ENCODE measurements at regions of chr3 and their contacts with region 1.

Region 1: DNA sequence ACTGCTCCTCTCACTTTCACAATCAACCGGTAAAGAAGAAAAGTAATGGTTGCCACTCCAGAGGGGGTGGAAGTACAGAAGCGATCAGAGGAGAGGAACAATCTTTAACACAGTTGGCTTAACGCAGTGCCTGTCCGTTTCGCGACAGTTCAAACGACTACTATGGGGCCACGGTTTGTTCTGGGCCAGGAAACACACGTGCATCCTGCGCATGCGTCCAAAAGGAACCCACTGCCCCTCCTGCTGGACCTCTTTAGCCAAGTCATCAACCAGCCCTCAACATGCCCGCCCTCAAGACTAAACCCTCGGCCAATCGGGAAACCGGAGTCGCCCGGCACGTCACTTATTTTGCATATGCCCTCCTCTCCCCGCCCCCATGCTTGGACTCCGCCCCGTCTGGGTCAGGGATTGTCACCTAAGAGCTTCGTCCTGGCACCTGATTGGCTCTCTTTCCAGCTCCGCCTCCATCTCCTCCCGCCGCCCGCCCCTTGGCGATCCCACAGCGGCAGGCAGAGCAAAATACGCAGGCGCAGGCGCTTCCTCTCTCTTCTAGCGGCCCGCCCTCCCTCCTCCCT is 345 bp upstream of the CDV3 start:
- DNase-seq: peak; percentile 100
- H3K4me3 ChIP-seq: peak overlapping the region; percentile 48
- H3K4me3 Mint-ChIP-seq: peak overlapping the region; percentile 79 to 94 (median 89)
- H3K27ac ChIP-seq: peak overlapping the region; percentile 79
- H3K27ac Mint-ChIP-seq: peak overlapping the region; percentile 95 to 100 (median 99)
- H3K4me1 ChIP-seq: peaks cover 41% of the 10 kb centered on the region
- H3K4me1 Mint-ChIP-seq: peaks cover 51 to 59% (median 53%) of the 10 kb centered on the region in 3 donors
- H3K27me3 ChIP-seq: no peaks in the 10 kb centered on the region
- H3K27me3 Mint-ChIP-seq: peaks cover 0 to 3% of the 10 kb centered on the region in 2 donors

Region 2: GRCh38 chr3:133237380-133237779 is 335.8 kb before region 1 on chr3:
- CTCF ChIA-PET with region 1: no interaction called
- POLR2A ChIA-PET with region 1: no interaction called
- DNase-seq: no peak
- H3K4me3 ChIP-seq: no peak overlapping the region
- H3K4me3 Mint-ChIP-seq: no peak overlapping the region
- H3K27ac ChIP-seq: no peak overlapping the region
- H3K27ac Mint-ChIP-seq: no peak overlapping the region
- H3K4me1 ChIP-seq: no peaks in the 10 kb centered on the region
- H3K4me1 Mint-ChIP-seq: no peaks in the 10 kb centered on the region
- H3K27me3 ChIP-seq: no peaks in the 10 kb centered on the region
- H3K27me3 Mint-ChIP-seq: peaks cover 6 to 7% of the 10 kb centered on the region in 2 donors

Region 3: DNA sequence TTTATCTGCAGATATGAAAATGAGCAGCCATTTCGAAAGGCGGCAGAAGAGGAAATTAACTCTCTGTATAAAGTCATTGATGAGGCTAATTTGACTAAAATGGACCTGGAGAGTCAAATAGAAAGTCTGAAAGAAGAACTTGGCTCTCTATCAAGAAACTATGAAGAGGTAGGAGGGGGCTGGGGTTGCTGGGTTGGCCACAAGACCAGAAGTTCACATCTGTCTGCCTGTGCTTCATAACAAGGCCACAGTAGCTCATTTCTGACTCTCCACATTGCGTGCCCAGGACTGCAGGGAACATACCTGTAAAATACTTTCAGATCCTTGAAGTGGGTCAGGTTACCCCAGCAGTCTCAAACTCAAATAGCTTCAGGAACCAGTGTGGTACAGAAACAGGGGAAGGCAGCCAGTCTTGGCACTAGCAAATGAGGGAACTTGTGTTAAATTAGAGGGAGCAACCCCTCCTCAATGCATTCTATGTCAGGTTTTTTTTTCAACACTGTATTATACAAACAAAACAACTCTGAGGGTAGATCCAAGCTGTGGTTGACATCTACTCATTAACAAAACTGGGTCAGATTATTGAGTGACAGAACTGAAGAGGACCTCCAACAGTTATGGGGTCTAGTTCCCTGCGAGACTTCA is 124.5 kb before region 1 on chr3:
- CTCF ChIA-PET with region 1: interaction called, 7 read pairs
- POLR2A ChIA-PET with region 1: interaction called, 19 read pairs
- DNase-seq: peak in 2 of 5 donors; percentile 14 to 72
- H3K4me3 ChIP-seq: no peak overlapping the region
- H3K4me3 Mint-ChIP-seq: peak overlapping the region in 6 of 7 donors; percentile 1 to 65 (median 30)
- H3K27ac ChIP-seq: no peak overlapping the region
- H3K27ac Mint-ChIP-seq: peak overlapping the region; percentile 64 to 93 (median 88)
- H3K4me1 ChIP-seq: peaks cover 8% of the 10 kb centered on the region
- H3K4me1 Mint-ChIP-seq: peaks cover 14 to 47% (median 29%) of the 10 kb centered on the region in 3 donors
- H3K27me3 ChIP-seq: no peaks in the 10 kb centered on the region
- H3K27me3 Mint-ChIP-seq: no peaks in the 10 kb centered on the region

Region 4: DNA sequence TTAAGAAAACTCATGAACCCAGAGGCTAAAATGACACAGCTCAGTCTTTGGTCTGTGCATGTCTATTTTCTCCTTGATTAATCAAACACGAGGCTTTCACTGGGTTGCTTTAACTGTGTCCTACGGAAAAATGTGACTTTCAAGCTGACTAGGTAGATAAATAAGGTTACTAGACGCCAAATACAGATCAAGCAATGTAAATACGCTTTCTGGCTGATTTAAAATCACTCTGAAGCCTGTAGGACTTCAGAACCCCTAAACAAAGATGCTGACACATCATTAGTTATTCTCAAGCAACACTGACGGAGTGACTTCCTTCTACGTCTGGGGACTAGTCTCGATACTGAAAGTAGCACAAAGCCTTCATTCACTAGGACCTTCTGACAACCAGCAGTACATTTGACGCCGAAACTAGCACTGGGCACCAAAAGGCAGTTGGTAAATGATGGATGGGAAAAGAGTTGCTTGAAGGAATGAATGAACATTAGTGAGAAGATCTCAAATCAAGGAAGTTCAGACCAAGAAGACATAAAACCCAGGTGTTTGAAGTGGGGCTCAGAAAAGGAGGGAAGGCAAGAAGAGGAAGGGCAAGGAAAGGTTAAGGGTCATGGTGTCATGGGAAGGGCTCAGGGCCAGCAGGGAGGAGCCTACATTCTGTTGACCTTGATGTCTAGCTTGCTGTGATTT is 66.8 kb before region 1 on chr3:
- CTCF ChIA-PET with region 1: interaction called, 5 read pairs
- POLR2A ChIA-PET with region 1: interaction called, 11 read pairs
- DNase-seq: peak in 3 of 5 donors; percentile 37 to 52 (median 40)
- H3K4me3 ChIP-seq: peak overlapping the region; percentile 58
- H3K4me3 Mint-ChIP-seq: peak overlapping the region; percentile 37 to 85 (median 78)
- H3K27ac ChIP-seq: no peak overlapping the region
- H3K27ac Mint-ChIP-seq: peak overlapping the region; percentile 48 to 97 (median 94)
- H3K4me1 ChIP-seq: peaks cover 17% of the 10 kb centered on the region
- H3K4me1 Mint-ChIP-seq: peaks cover 13 to 20% (median 15%) of the 10 kb centered on the region in 3 donors
- H3K27me3 ChIP-seq: no peaks in the 10 kb centered on the region
- H3K27me3 Mint-ChIP-seq: peaks cover 0 to 1% of the 10 kb centered on the region in 2 donors

Region 5: DNA sequence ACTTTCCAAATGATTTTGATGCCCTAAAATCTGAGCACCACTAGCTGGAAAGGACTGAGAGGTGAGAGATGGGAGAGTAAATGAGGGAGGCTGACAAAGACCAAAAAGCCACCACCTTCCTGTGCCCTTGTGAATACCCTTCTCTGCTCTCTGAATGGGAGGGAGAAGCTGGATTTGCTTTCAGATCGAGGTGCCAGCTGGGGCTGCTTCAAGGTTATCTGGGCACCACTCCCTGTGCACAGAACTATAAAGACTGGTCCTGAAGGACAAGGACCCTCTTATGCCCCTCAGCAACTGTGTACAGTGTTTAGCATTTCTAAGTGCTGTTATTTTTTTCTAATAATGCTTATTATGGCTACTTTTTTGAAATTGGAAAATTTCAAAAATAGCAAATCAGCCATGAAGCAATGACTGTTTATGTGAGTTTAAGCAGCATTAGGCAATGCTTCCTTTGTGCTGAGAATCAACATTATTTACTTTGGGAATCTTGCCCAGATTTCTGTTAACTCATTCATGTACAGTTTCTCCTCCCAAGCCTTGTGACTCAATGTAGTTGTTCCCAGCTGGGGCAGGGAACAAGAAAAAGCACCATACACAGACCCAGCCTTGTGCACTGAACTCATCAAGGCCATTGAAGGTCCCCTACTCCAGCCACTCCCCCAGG is 37.0 kb before region 1 on chr3:
- CTCF ChIA-PET with region 1: no interaction called
- POLR2A ChIA-PET with region 1: no interaction called
- DNase-seq: no peak
- H3K4me3 ChIP-seq: no peak overlapping the region
- H3K4me3 Mint-ChIP-seq: no peak overlapping the region
- H3K27ac ChIP-seq: no peak overlapping the region
- H3K27ac Mint-ChIP-seq: no peak overlapping the region
- H3K4me1 ChIP-seq: no peaks in the 10 kb centered on the region
- H3K4me1 Mint-ChIP-seq: no peaks in the 10 kb centered on the region
- H3K27me3 ChIP-seq: no peaks in the 10 kb centered on the region
- H3K27me3 Mint-ChIP-seq: peaks cover 9 to 13% of the 10 kb centered on the region in 2 donors

Region 6: DNA sequence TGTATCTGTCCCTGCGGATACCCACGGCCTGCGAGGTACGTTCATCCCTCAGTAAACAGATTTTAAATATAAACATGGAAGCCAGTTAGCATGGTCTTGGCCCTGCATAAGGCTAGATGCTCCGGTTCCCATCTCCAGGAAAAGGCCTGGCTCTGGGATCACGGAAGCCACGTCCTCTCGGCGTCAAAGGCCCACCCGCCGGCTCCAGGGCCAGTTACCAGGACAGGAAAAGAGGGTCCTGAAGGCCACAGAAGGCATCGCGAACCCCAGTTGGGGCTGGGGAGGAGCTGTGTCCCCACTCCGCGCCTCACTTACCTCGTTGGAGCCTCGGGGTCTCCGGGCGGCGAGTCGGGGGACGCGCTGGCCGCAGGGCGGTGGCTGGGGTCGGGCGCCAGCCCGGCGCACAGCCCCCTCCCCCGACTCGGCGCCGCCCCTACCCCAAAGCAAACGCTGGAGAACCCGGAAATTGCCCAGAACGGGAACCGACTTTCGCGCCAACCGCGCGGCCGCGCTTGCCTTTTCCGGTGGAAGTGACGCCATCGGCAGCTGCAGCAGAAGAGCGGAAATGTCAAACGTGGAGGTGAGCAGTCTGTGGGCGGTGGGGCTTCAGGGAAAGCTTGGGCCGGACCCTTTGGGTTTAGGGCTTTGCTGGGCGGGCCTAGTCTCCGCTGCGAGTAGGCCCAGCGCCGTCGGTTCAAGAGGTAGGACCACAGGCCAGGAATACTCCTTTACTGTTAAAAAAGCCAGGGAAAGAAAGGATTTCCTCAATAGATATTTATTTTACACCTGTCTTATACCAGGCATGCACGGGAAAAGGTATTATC is 88.5 kb after region 1 on chr3 and contains the start of gene TOPBP1:
- CTCF ChIA-PET with region 1: interaction called, 3 read pairs
- POLR2A ChIA-PET with region 1: interaction called, 16 read pairs
- DNase-seq: peak; percentile 76 to 90 (median 80)
- H3K4me3 ChIP-seq: peak within 1 kb of the TSS; percentile 77
- H3K4me3 Mint-ChIP-seq: peak within 1 kb of the TSS; percentile 93 to 99 (median 99)
- H3K27ac ChIP-seq: peak within 1 kb of the TSS; percentile 84
- H3K27ac Mint-ChIP-seq: peak within 1 kb of the TSS; percentile 92 to 100 (median 99)
- H3K4me1 ChIP-seq: peaks cover 27% of the 10 kb centered on the region
- H3K4me1 Mint-ChIP-seq: peaks cover 42 to 51% (median 48%) of the 10 kb centered on the region in 3 donors
- H3K27me3 ChIP-seq: no peaks in the 10 kb centered on the region
- H3K27me3 Mint-ChIP-seq: no peaks in the 10 kb centered on the region
- total RNA-seq, gene TOPBP1: 72.0 to 72.6 TPM